Adrenal gland (tissue), 19 donors: ENCODE measurements at regions of chr2 and their contacts with region 1.

Region 1: DNA sequence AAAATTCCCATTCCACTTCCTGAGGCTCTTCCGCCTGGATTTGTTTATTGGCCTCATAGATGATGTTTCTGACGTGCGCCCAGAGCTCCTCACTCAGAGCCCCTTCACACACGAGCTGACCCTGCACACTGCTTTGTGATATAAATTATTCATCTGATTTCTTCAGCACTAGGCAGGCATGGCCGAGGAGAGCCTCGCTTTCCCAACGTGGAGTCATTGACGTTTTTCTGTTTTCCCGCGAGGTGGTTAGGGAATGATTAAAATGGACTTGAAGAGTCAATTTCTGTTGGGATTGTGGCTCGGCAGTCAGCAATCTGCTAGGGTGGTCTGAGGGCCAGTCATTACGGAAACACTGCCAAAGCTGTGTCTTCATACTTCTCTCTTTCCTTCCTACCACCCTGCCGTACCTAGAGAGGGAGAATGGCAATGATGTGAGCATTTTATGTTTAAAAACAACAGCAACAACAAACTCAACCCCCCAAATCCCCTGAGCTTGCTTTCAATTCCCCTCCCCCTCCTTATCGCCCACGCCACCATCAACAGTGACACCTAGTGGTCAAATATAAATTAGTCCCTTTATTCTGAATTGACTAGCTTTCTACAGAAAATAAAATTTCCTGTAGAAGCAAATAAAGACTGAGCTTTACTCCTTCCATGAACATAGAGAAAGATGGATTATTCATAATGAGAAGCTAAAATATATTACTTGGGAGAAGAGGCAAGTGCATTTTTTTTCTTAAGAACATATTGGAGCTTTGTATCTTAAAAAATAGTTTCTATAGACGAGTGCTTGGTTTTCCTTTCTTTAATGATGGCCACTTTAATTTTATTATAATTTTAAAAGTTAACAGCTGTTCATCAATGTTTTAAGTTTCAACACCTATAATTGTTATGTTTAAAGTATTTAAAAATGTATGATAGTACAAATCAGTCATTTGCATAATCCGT is 285.1 kb downstream of the MTX2 start:
- DNase-seq: peak; percentile 27 to 76 (median 44)
- H3K4me3 ChIP-seq: peak overlapping the region in 2 of 4 donors; percentile 27 to 57
- H3K27ac ChIP-seq: peak overlapping the region in 4 of 5 donors; percentile 44 to 83 (median 78)
- H3K4me1 ChIP-seq: peaks cover 0 to 22% of the 10 kb centered on the region in 2 donors
- H3K27me3 ChIP-seq: no peaks in the 10 kb centered on the region
- CTCF ChIP-seq: peak; percentile 76 to 97 (median 88)
- POLR2A ChIP-seq: peak in 1 of 2 donors; percentile 2

Region 2: DNA sequence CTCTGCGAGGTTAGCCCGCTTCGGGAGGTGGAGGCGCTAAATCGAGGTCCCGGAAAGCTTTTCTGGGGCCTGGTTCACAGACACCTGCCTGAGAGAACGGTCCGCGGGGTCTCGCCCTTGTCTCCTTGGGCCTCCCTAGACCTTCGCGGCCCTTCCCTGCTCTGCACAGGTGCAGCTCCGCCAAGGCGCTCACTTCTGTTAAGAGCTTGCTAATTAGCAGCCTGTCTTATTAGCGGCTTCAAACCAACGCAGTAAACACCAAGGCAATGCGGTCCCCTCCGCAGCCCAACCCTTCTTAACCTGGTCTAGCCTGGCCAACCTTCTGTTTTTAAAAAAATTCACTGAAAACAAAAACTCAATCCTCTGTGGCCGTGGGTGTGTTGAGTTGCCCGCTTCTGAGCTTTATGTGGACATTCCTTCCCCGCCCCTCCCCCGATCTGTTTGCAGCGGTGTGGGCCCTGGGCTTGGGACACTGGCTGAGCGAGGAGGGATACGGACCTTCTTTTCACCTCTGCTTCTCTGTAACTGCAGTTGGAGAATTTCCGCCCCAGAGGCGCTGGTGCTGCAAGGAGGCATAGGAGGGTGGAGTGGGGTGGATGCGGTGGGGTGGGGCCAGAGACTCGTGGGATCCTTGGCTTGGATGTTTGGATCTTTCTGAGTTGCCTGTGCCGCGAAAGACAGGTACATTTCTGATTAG is 406.4 kb before region 1 on chr2:
- intact Hi-C with region 1: loop called in 1 of 2 experiments (anchors 5 kb)
- DNase-seq: peak in 3 of 7 donors; percentile 9 to 50 (median 13)
- H3K4me3 ChIP-seq: no peak overlapping the region
- H3K27ac ChIP-seq: no peak overlapping the region
- H3K4me1 ChIP-seq: peaks cover 0 to 7% of the 10 kb centered on the region in 2 donors
- H3K27me3 ChIP-seq: no peaks in the 10 kb centered on the region
- CTCF ChIP-seq: no peak
- POLR2A ChIP-seq: no peak

Region 3: GRCh38 chr2:176325732-176326131 is 228.6 kb before region 1 on chr2:
- intact Hi-C with region 1: no loop called
- DNase-seq: no peak
- H3K4me3 ChIP-seq: no peak overlapping the region
- H3K27ac ChIP-seq: no peak overlapping the region
- H3K4me1 ChIP-seq: no peaks in the 10 kb centered on the region
- H3K27me3 ChIP-seq: no peaks in the 10 kb centered on the region
- CTCF ChIP-seq: no peak
- POLR2A ChIP-seq: no peak

Region 4: GRCh38 chr2:176454893-176455811 is 99.2 kb before region 1 on chr2:
- intact Hi-C with region 1: loop called (anchors 10 kb)
- DNase-seq: peak; percentile 63 to 97 (median 87)
- H3K4me3 ChIP-seq: no peak overlapping the region
- H3K27ac ChIP-seq: peak overlapping the region in 1 of 5 donors; percentile 45
- H3K4me1 ChIP-seq: no peaks in the 10 kb centered on the region
- H3K27me3 ChIP-seq: no peaks in the 10 kb centered on the region
- CTCF ChIP-seq: peak; percentile 80 to 98 (median 88)
- POLR2A ChIP-seq: no peak

Region 5: GRCh38 chr2:176653479-176654443 is 99.4 kb after region 1 on chr2:
- intact Hi-C with region 1: no loop called
- DNase-seq: peak; percentile 73 to 87 (median 81)
- H3K4me3 ChIP-seq: no peak overlapping the region
- H3K27ac ChIP-seq: no peak overlapping the region
- H3K4me1 ChIP-seq: peaks cover 6 to 21% of the 10 kb centered on the region in 2 donors
- H3K27me3 ChIP-seq: no peaks in the 10 kb centered on the region
- CTCF ChIP-seq: peak; percentile 62 to 85 (median 82)
- POLR2A ChIP-seq: no peak

Region 6: DNA sequence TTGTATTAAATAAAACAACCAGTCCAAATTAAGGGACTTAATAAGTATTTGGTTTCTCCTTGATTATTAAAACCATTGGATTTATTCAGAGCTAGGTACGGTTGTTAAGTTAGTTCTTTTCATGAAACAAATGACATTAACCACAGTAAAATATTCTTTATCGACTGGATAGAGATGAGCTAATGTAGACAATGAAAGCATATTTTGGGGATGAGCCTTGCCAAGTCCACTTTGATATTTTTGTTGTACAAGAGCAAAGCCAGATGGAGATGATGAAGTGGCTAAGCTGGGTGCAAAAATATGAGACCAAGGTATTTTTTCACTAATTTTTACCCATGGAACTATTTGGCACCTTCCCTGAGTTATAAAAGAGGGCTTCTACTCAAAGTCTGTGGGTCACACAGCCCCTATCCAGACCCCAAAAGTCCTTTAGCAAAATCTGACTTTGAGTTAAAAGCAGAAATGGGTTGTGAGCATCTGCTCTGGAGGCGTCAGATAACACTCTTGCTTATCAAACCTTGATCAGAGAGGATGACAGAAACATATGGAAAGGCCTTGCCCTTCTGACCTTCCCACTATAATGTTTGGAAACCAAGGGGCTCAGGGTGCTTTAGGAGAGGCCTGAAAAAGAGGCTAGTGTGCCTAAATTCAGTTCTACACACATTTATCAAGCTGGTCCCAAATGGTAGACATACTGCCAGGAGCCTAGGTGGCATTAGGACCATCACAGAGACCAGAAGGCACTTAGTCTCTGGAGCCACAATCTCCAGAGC is 171.7 kb after region 1 on chr2:
- intact Hi-C with region 1: no loop called
- DNase-seq: no peak
- H3K4me3 ChIP-seq: no peak overlapping the region
- H3K27ac ChIP-seq: no peak overlapping the region
- H3K4me1 ChIP-seq: peaks cover 7 to 13% of the 10 kb centered on the region in 2 donors
- H3K27me3 ChIP-seq: no peaks in the 10 kb centered on the region
- CTCF ChIP-seq: no peak
- POLR2A ChIP-seq: no peak

Region 7: DNA sequence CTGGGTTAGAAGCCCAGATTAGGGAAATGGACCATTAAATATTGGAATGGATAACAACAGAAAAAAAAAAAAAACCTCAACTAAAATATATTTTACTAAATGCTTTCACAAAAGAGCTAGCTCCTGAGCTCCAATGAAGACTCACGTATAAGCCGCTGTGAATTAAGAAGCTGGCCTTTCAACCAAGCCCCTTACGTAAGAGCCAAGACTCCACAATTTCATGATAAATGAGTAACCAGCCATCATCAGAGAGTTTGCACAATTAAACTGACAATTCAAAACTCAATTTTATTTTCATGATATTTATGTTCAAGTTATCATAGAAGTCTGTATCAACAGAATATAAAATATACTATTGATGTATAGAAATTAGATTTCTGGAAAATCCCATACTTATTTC is 587.5 kb after region 1 on chr2:
- intact Hi-C with region 1: no loop called
- DNase-seq: no peak
- H3K4me3 ChIP-seq: no peak overlapping the region
- H3K27ac ChIP-seq: no peak overlapping the region
- H3K4me1 ChIP-seq: no peaks in the 10 kb centered on the region
- H3K27me3 ChIP-seq: peaks cover 3% of the 10 kb centered on the region
- CTCF ChIP-seq: no peak
- POLR2A ChIP-seq: no peak